ENCODE measurements at regions of chr16 and their contacts with region 1.

Region 1: DNA sequence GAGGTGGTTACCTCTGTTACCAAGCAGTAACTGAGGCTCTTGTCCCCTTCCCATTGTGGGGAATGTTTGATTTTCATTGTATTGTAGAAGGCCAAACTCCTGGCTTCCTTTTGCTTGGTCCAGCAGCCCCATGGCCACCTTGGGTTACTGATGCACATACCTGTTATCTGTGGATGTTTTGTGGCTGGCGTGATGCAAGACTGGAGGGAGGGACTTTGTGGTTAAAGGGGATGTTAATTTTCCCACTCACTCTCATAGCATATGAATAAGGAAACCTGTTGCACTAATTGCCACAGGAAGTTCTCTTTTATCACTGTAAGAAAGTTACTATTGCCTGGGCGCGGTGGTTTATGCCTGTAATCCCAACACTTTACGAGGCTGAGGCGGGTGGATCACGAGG is 168.6 kb upstream of the HS3ST4 start:
- DNase-seq: no peak
- H3K4me3 ChIP-seq: no peak overlapping the region
- H3K4me3 Mint-ChIP-seq: no peak overlapping the region
- H3K27ac ChIP-seq: no peak overlapping the region
- H3K27ac Mint-ChIP-seq: no peak overlapping the region
- H3K4me1 ChIP-seq: no peaks in the 10 kb centered on the region
- H3K4me1 Mint-ChIP-seq: no peaks in the 10 kb centered on the region
- H3K27me3 ChIP-seq: no peaks in the 10 kb centered on the region
- H3K27me3 Mint-ChIP-seq: peaks cover 2 to 4% (median 3%) of the 10 kb centered on the region in 3 donors
- CTCF ChIP-seq: no peak

Region 2: DNA sequence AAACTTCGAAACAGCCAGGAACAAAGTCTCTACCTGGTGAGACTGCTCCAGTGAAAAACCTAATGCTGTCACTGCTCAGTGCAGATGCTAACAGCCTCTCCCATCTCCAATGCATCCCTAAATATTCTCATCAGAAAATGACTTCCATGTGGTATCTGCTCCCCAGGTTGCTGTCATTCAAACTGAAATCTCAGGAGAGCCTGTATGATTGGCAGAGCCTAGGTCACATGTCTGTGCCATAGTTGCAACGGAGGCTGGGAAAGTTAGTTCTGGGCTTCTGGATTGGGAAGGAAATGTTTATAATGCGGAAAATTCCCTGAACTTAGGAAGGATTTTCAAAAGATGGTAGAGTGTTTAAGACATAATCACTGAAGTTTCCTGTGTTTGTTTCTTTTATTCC is 59.1 kb before region 1 on chr16:
- intact Hi-C with region 1: loop called in 1 of 2 experiments (anchors 10 kb)
- DNase-seq: no peak
- H3K4me3 ChIP-seq: no peak overlapping the region
- H3K4me3 Mint-ChIP-seq: no peak overlapping the region
- H3K27ac ChIP-seq: no peak overlapping the region
- H3K27ac Mint-ChIP-seq: no peak overlapping the region
- H3K4me1 ChIP-seq: no peaks in the 10 kb centered on the region
- H3K4me1 Mint-ChIP-seq: no peaks in the 10 kb centered on the region
- H3K27me3 ChIP-seq: no peaks in the 10 kb centered on the region
- H3K27me3 Mint-ChIP-seq: peaks cover 0 to 2% (median 1%) of the 10 kb centered on the region in 3 donors
- CTCF ChIP-seq: no peak

Measured in CD14-positive monocyte (primary cell).